WTC11 (cell line): ENCODE measurements at regions of chr3 and their contacts with region 1.

Region 1: GRCh38 chr3:190443257-190443656 is 6.4 kb downstream of the TMEM207 start:
- DNase-seq: no peak
- ATAC-seq: peak; percentile 34; the same call in 1 of the 2 replicates
- H3K4me3 Mint-ChIP-seq: no peak overlapping the region
- H3K27ac Mint-ChIP-seq: no peak overlapping the region
- H3K4me1 Mint-ChIP-seq: no peaks in the 10 kb centered on the region
- H3K27me3 Mint-ChIP-seq: no peaks in the 10 kb centered on the region
- CTCF ChIP-seq: no peak

Region 2: GRCh38 chr3:190339130-190339529 is 104.1 kb before region 1 on chr3:
- CTCF ChIA-PET with region 1: no interaction called
- POLR2A ChIA-PET with region 1: no interaction called
- DNase-seq: no peak
- ATAC-seq: peak; percentile 67
- H3K4me3 Mint-ChIP-seq: no peak overlapping the region
- H3K27ac Mint-ChIP-seq: no peak overlapping the region
- H3K4me1 Mint-ChIP-seq: no peaks in the 10 kb centered on the region
- H3K27me3 Mint-ChIP-seq: no peaks in the 10 kb centered on the region
- CTCF ChIP-seq: no peak

Region 3: DNA sequence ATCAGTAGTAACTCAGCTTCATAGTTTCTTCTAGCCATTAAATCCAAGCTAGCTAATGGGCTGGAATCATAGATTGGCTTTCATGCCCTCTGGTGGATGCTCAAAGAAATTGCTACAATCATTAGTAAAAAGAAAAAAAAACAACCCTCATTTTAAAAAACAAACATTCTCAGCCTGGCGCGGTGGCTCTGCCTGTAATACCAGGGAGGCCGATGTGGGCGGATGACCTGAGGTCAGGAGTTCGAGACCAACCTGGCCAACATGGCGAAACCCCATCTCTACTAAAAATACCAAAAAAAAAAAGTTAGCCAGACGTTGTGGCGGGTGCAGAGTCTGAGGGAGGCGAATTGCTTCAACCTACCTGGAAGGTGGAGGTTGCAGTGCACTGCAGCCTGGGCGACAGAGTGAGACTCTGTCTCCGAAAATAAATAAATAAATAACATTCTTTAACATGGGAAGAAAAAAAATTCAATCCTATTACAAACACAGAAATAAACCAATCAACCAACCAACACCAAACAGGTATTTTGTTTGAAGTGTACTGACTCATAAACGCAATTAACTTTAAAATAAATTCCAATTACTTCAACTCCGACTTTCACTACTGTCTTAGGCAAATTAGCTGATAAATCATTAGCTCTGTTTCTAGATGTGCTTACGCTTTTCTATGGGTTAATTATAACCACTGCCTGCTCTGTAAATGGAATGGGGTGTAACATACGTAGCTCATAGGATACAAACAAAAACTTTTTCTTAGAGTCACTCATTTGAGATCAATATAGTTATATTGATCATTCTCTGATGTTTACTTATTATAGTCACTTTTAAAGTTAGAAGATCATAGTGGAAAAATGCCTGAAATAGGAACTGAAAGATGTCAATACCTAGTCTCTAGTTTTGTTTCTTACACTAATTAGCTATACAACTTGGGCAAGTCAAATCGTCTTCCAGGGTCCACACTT is 18.5 kb before region 1 on chr3:
- CTCF ChIA-PET with region 1: interaction called, 10 read pairs
- POLR2A ChIA-PET with region 1: no interaction called
- DNase-seq: peak; percentile 78
- ATAC-seq: peak; percentile 96
- H3K4me3 Mint-ChIP-seq: peak overlapping the region; percentile 7; the same call in 1 of the 2 replicates
- H3K27ac Mint-ChIP-seq: 0 out of 2 replicates have a peak overlapping the region, but pooled peaks have one; percentile 50
- H3K4me1 Mint-ChIP-seq: no peaks in the 10 kb centered on the region
- H3K27me3 Mint-ChIP-seq: no peaks in the 10 kb centered on the region
- CTCF ChIP-seq: peak; percentile 58; the same call in 1 of the 2 replicates

Region 4: GRCh38 chr3:190513409-190514162 is 70.3 kb after region 1 on chr3 and contains the start of gene IL1RAP:
- CTCF ChIA-PET with region 1: interaction called, 10 read pairs
- POLR2A ChIA-PET with region 1: no interaction called
- DNase-seq: peak; percentile 80
- ATAC-seq: peak; percentile 96
- H3K4me3 Mint-ChIP-seq: peak within 1 kb of the TSS; percentile 83
- H3K27ac Mint-ChIP-seq: no peak within 1 kb of the TSS
- H3K4me1 Mint-ChIP-seq: peaks cover 17% of the 10 kb centered on the region
- H3K27me3 Mint-ChIP-seq: peaks cover 37% of the 10 kb centered on the region
- CTCF ChIP-seq: 0 out of 2 replicates have a peak, but pooled peaks have one; percentile 20
- total RNA-seq, gene IL1RAP: 4.5 to 5.7 TPM (median 4.5 TPM) in 3 replicates

Region 5: GRCh38 chr3:190543671-190544070 is 100.4 kb after region 1 on chr3:
- CTCF ChIA-PET with region 1: no interaction called
- POLR2A ChIA-PET with region 1: no interaction called
- DNase-seq: no peak
- ATAC-seq: no peak
- H3K4me3 Mint-ChIP-seq: no peak overlapping the region
- H3K27ac Mint-ChIP-seq: no peak overlapping the region
- H3K4me1 Mint-ChIP-seq: peaks cover 39% of the 10 kb centered on the region
- H3K27me3 Mint-ChIP-seq: peaks cover 75% of the 10 kb centered on the region
- CTCF ChIP-seq: no peak